ENCODE measurements at regions of chr19 and their contacts with region 1.

Region 1: DNA sequence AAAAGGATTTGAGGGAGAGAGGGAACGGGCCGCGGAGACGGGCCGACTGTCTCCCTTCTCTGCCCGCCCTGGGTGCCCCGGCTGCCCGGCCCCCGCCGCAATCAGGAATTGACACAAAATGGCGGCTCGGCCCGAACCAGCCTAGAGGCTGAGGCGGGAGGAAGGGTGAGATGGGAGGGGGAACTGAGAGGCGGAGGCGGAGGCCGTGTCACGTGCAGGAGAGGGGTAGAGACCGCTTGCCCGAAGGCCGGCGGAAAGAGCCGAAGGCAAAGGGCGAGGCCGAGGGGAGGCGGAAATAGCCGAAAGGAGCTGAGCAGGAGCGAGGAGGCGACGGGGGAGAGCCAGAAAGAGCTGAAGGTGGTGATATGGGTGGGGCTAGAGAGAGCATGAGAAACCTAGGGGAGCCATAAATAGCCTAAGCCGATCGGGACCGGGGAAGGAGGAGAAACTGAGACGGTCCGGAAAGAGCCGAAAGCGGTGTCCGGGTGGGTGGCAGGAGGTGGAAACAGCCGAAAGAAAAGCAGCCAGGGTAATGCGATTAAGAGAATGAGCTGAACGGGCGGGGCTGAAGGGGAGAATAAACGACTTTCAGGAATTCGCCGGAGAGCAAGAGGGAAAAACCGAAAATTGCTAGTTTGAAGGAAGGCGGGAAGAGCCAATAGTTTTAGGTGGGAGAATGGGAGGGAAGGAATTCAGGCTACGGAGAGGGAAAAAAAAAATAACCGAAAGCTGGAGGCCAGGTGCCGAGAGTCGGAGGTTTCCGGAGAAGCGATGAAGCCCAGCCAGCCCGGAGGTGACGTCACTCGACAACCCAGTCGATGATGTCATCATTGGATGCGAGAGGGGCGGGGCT is at the start of gene ZC3H4:
- DNase-seq: peak; percentile 98
- ATAC-seq: peak; percentile 93
- H3K4me3 ChIP-seq: peak within 1 kb of the TSS; percentile 87 to 94
- H3K27ac ChIP-seq: peak within 1 kb of the TSS; percentile 100
- H3K4me1 ChIP-seq: peaks cover 15 to 36% of the 10 kb centered on the region in 2 experiments
- H3K27me3 ChIP-seq: no peaks in the 10 kb centered on the region
- CTCF ChIP-seq: no peak
- POLR2A ChIP-seq: peak; percentile 70
- RAD21 ChIP-seq: no peak
- total RNA-seq, gene ZC3H4: 45.1 TPM

Region 2: DNA sequence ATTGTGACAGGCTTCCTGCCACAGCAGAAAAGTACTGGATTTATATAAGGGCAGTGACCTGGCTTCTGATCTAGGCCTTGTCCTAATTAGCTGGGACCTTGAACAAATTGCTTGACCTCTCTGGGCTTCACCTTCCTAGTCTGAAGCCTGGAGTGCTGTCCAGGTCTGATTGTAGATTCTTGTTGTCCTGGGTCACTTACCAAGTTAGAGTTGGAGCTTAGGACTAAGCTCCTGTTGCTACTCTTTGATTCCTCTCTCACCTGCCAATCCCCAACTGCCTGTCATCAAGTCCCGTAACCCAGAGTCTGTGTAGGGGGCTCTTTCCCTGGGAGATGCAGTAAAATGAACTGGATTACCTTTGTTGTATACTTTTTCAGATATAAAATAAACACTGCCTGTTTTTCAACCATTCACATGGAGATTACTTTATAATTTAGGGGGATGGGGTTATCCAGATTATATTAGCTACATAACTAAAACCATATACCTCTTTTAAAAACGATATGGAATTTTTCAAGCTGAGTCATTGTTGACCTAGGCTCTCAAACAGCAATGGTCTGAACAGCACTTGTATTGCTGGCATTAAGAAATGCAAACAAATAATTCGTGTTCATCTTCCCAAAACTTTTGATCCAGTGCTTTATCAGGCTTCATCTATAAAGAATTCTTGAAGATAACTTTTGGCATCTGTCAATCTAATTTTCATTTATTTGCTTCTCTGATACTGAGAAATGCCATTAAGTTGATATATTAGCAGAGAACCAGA is 246.7 kb before region 1 on chr19:
- CTCF ChIA-PET with region 1: no interaction called
- POLR2A ChIA-PET with region 1: no interaction called
- RAD21 ChIA-PET with region 1: no interaction called
- intact Hi-C with region 1: no loop called
- DNase-seq: no peak
- ATAC-seq: peak; percentile 48
- H3K4me3 ChIP-seq: no peak overlapping the region
- H3K27ac ChIP-seq: peak overlapping the region; percentile 57
- H3K4me1 ChIP-seq: peaks cover 57 to 62% of the 10 kb centered on the region in 2 experiments
- H3K27me3 ChIP-seq: no peaks in the 10 kb centered on the region
- CTCF ChIP-seq: no peak
- POLR2A ChIP-seq: no peak
- RAD21 ChIP-seq: no peak

Region 3: DNA sequence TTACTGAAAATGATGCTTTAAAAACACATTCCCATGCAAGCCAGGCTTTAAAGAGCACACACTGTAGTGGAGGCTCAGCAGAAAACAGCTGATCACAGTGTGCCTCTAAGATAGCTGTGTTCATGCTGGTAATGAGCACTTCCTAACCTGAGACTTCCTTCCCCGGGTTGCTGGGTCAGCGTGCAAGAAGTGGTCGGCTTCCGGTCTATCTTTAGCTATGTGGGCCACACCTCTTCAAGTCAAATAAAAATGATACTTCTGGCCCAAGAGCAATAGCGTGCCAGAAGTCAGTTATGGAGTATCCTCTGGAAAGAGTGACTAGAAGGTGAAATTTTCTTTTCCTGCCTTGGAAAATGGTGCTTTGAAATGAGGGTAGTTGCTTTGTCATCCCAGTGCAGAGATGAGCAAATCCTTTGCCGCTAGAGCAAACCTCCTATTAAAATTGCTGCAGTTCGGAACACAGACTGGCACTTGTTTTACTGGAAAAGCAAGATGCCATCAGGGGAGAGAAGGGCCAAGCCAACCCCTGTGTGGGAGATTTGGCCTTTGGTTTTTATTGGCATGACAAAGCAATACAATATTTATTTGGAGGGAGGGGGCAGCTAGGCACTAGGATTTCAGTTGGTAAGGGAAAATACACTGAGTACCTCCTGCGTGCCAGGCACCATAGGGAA is 188.2 kb before region 1 on chr19:
- CTCF ChIA-PET with region 1: no interaction called
- POLR2A ChIA-PET with region 1: no interaction called
- RAD21 ChIA-PET with region 1: no interaction called
- intact Hi-C with region 1: no loop called
- DNase-seq: no peak
- ATAC-seq: peak; percentile 71
- H3K4me3 ChIP-seq: peak overlapping the region in 1 of 2 experiments; percentile 47; a peak in 3 of 4 replicates
- H3K27ac ChIP-seq: peak overlapping the region; percentile 68
- H3K4me1 ChIP-seq: peaks cover 34 to 51% of the 10 kb centered on the region in 2 experiments
- H3K27me3 ChIP-seq: no peaks in the 10 kb centered on the region
- CTCF ChIP-seq: no peak
- POLR2A ChIP-seq: no peak
- RAD21 ChIP-seq: 0 out of 2 replicates have a peak, but pooled peaks have one; percentile 8

Region 4: DNA sequence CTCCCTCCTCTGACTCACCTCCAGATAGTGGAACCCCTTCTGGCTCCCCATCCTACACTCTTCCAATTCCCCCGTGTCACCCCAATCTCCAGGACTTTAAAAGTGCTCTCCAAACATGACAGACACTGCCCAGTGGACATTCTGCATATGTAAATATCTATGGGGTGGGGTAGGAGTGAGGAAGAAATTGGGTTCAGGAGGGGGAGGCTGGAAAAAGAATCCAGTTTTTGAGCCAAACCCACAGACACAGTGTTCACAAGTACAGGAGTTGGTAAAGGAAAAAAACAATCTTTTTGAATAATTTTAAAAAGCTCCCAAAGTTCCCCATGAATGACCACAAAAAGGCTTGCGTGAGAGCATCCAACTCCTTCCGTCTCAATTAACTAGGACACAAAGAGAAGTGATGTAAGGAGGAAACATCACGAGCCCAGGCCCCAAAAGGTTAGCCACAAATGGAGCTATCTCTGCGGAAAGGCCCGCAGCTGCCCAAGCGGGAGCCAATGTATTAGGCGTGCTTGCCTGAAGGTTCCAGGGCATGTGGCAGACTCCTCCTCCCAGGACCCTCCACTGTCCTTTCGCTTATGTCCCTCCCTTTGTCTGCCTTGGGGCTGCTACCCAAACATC is 17.6 kb before region 1 on chr19:
- CTCF ChIA-PET with region 1: interaction called, 3 read pairs
- POLR2A ChIA-PET with region 1: interaction called, 27 read pairs
- RAD21 ChIA-PET with region 1: no interaction called
- intact Hi-C with region 1: loop called (anchors 1 kb)
- DNase-seq: no peak
- ATAC-seq: peak; percentile 15
- H3K4me3 ChIP-seq: peak overlapping the region; percentile 12 to 46; a peak in 3 of 4 replicates
- H3K27ac ChIP-seq: peak overlapping the region; percentile 66
- H3K4me1 ChIP-seq: peaks cover 50 to 68% of the 10 kb centered on the region in 2 experiments
- H3K27me3 ChIP-seq: no peaks in the 10 kb centered on the region
- CTCF ChIP-seq: no peak
- POLR2A ChIP-seq: no peak
- RAD21 ChIP-seq: no peak

Region 5: GRCh38 chr19:47124937-47125668 is 11.9 kb after region 1 on chr19:
- CTCF ChIA-PET with region 1: interaction called, 7 read pairs
- POLR2A ChIA-PET with region 1: interaction called, 20 read pairs
- RAD21 ChIA-PET with region 1: no interaction called
- intact Hi-C with region 1: no loop called
- DNase-seq: peak; percentile 85
- ATAC-seq: peak; percentile 82
- H3K4me3 ChIP-seq: no peak overlapping the region
- H3K27ac ChIP-seq: no peak overlapping the region
- H3K4me1 ChIP-seq: peaks cover 26 to 40% of the 10 kb centered on the region in 2 experiments
- H3K27me3 ChIP-seq: no peaks in the 10 kb centered on the region
- CTCF ChIP-seq: peak; percentile 59 to 92 (median 75)
- POLR2A ChIP-seq: no peak
- RAD21 ChIP-seq: peak; percentile 96

Region 6: DNA sequence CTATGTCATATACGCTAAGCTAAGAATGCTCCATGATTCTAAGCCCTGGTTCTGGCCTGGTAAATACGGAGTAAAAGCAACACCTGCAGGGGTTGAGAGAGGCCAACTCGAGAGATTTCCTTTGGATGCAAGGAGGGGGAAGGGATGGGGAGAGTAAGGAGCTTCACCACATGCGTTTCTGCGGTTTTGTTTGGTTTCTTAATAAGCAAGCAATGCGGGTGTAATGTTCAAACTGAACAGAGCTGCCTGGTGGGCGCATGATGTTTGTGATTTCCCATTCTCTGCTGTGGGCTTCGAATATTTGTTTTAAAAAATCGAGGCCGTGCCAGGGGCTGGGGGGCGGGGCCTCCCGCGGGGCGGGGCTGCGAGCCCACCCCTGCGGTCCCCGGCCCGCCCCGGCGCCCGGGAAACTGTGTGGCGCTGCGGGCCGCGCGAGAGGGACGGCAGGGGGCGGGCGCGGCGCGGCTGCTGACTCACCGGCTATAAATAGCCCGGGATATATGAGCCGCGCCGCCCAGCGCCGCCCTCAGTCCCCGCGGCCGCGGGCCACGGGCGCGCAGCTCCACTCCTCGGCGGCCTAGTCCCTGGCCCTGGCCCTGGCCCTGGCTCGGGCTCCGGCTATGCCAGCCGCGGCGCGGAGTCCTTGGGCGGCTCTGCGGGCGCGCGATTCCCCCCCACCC is 112.7 kb after region 1 on chr19:
- CTCF ChIA-PET with region 1: no interaction called
- POLR2A ChIA-PET with region 1: interaction called, 10 read pairs
- RAD21 ChIA-PET with region 1: no interaction called
- intact Hi-C with region 1: no loop called
- DNase-seq: no peak
- ATAC-seq: peak; percentile 58
- H3K4me3 ChIP-seq: peak overlapping the region; percentile 76 to 78
- H3K27ac ChIP-seq: peak overlapping the region; percentile 97
- H3K4me1 ChIP-seq: peaks cover 17 to 52% of the 10 kb centered on the region in 2 experiments
- H3K27me3 ChIP-seq: no peaks in the 10 kb centered on the region
- CTCF ChIP-seq: no peak
- POLR2A ChIP-seq: peak; percentile 99
- RAD21 ChIP-seq: no peak

Measured in HCT116 (cell line).